K562 (cell line): ENCODE measurements at regions of chr12 and their contacts with region 1.

Region 1: GRCh38 chr12:118372541-118373495 is at the start of gene TAOK3:
- DNase-seq: peak; percentile 90 to 99 (median 93)
- ATAC-seq: peak; percentile 87
- H3K4me3 ChIP-seq: peak within 1 kb of the TSS; percentile 96
- H3K27ac ChIP-seq: peak within 1 kb of the TSS; percentile 82
- H3K4me1 ChIP-seq: peaks cover 14 to 31% of the 10 kb centered on the region in 2 experiments; a peak in 4 of 5 replicates
- H3K27me3 ChIP-seq: no peaks in the 10 kb centered on the region
- CTCF ChIP-seq: no peak
- EP300 ChIP-seq: peak; percentile 32
- POLR2A ChIP-seq: peak; percentile 88
- RAD21 ChIP-seq: 0 out of 4 replicates have a peak, but pooled peaks of 1 of the 2 experiments have one; percentile 2
- polyA plus RNA-seq, gene TAOK3: 24.3 to 28.0 TPM

Region 2: GRCh38 chr12:117874842-117875434 is 497.9 kb before region 1 on chr12:
- CTCF ChIA-PET with region 1: interaction called, 3 read pairs
- POLR2A ChIA-PET with region 1: no interaction called
- in situ Hi-C with region 1: no loop called
- intact Hi-C with region 1: loop called (anchors 5 kb)
- DNase-seq: peak; percentile 67 to 76 (median 74)
- ATAC-seq: peak; percentile 92
- H3K4me3 ChIP-seq: no peak overlapping the region
- H3K27ac ChIP-seq: no peak overlapping the region
- H3K4me1 ChIP-seq: peaks cover 0 to 4% of the 10 kb centered on the region in 2 experiments; a peak in 1 of 5 replicates
- H3K27me3 ChIP-seq: peaks cover 17 to 32% of the 10 kb centered on the region in 2 experiments; a peak in 4 of 5 replicates
- CTCF ChIP-seq: peak; percentile 79 to 87 (median 85)
- EP300 ChIP-seq: no peak
- POLR2A ChIP-seq: no peak
- RAD21 ChIP-seq: peak; percentile 60 to 87

Region 3: GRCh38 chr12:118120579-118121363 is 252.0 kb before region 1 on chr12:
- CTCF ChIA-PET with region 1: interaction called, 31 read pairs
- POLR2A ChIA-PET with region 1: interaction called, 14 read pairs
- in situ Hi-C with region 1: loop called (anchors 5 kb)
- intact Hi-C with region 1: loop called (anchors 1 kb)
- DNase-seq: peak; percentile 88 to 93 (median 90)
- ATAC-seq: peak; percentile 92
- H3K4me3 ChIP-seq: no peak overlapping the region
- H3K27ac ChIP-seq: peak overlapping the region; percentile 81
- H3K4me1 ChIP-seq: peaks cover 4 to 14% of the 10 kb centered on the region in 2 experiments; a peak in 4 of 5 replicates
- H3K27me3 ChIP-seq: no peaks in the 10 kb centered on the region
- CTCF ChIP-seq: peak in 2 of 3 experiments; percentile 55 to 64; a peak in 5 of 6 replicates
- EP300 ChIP-seq: no peak
- POLR2A ChIP-seq: no peak
- RAD21 ChIP-seq: peak in 1 of 2 experiments; percentile 55; a peak in 3 of 4 replicates

Region 4: GRCh38 chr12:118183705-118184104 is 189.1 kb before region 1 on chr12:
- CTCF ChIA-PET with region 1: interaction called, 62 read pairs
- POLR2A ChIA-PET with region 1: interaction called, 14 read pairs
- in situ Hi-C with region 1: loop called (anchors 25 kb)
- intact Hi-C with region 1: loop called (anchors 1 kb)
- DNase-seq: no peak
- ATAC-seq: no peak
- H3K4me3 ChIP-seq: no peak overlapping the region
- H3K27ac ChIP-seq: no peak overlapping the region
- H3K4me1 ChIP-seq: peaks cover 0 to 12% of the 10 kb centered on the region in 2 experiments; a peak in 3 of 5 replicates
- H3K27me3 ChIP-seq: no peaks in the 10 kb centered on the region
- CTCF ChIP-seq: no peak
- EP300 ChIP-seq: no peak
- POLR2A ChIP-seq: no peak
- RAD21 ChIP-seq: no peak

Region 5: DNA sequence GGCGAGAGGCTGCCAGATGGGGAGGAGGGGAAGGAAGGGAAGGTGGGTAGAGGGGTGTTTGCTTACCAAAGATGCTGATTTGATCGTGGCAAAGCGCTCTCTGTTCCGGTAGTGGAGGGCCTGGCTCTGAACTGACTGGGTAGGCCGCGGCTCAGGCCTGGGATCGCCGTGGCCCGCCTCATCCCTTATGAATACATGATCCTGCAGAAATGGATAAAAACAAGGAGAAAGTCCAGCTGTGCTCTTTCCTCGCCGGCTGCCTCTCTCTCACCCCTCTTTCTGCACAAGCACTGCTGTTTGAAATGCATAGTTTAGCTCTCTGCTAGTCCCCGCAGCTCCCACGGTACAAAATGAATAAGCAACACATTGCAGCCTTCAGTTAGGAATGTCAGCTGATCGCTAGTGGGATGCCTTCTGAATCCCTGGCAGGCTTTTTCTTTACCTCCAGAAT is 183.1 kb before region 1 on chr12:
- CTCF ChIA-PET with region 1: interaction called, 3 read pairs
- POLR2A ChIA-PET with region 1: interaction called, 14 read pairs
- in situ Hi-C with region 1: loop called (anchors 25 kb)
- intact Hi-C with region 1: no loop called
- DNase-seq: no peak
- ATAC-seq: no peak
- H3K4me3 ChIP-seq: no peak overlapping the region
- H3K27ac ChIP-seq: no peak overlapping the region
- H3K4me1 ChIP-seq: peaks cover 0 to 10% of the 10 kb centered on the region in 2 experiments; a peak in 3 of 5 replicates
- H3K27me3 ChIP-seq: no peaks in the 10 kb centered on the region
- CTCF ChIP-seq: no peak
- EP300 ChIP-seq: no peak
- POLR2A ChIP-seq: no peak
- RAD21 ChIP-seq: no peak

Region 6: DNA sequence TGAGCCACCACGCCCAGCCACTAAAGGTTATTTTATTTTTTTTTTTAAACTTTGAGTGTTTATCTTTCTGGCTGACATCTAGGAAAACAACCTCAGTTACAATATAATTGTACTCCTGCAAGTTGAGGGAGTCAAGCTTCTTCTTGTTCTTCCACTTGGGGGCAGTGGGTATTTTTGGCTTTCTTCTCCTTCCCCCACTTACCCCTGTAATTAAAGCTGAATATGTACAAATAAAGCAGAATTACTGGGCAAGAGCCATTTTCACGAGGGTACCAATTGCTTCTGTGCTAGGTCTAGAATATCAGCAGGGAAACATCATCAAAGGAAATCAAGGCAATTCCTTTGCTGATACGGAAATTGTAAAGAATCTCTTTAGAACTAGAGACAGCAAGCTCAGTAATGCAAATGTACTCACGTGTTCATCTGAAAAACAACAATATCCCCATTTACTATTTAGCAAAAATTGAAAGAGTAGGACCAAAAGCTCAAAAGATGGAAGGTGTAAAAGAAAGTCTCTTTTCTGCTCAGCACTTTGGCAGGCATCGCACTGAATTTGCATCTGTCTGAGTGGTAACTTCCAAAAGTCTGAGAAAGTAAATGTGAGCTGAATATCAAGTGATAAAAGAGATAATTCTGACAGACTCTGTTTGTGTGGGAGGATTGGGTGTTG is 72.9 kb before region 1 on chr12:
- CTCF ChIA-PET with region 1: interaction called, 7 read pairs
- POLR2A ChIA-PET with region 1: no interaction called
- in situ Hi-C with region 1: no loop called
- intact Hi-C with region 1: loop called (anchors 1 kb)
- DNase-seq: peak in 2 of 4 experiments; percentile 9 to 18
- ATAC-seq: peak; percentile 52; the same call in 1 of the 3 replicates
- H3K4me3 ChIP-seq: no peak overlapping the region
- H3K27ac ChIP-seq: no peak overlapping the region
- H3K4me1 ChIP-seq: peaks cover 0 to 5% of the 10 kb centered on the region in 2 experiments; a peak in 2 of 5 replicates
- H3K27me3 ChIP-seq: no peaks in the 10 kb centered on the region
- CTCF ChIP-seq: peak in 2 of 3 experiments; percentile 10 to 42; a peak in 3 of 6 replicates
- EP300 ChIP-seq: no peak
- POLR2A ChIP-seq: no peak
- RAD21 ChIP-seq: peak; percentile 30 to 45

Region 7: DNA sequence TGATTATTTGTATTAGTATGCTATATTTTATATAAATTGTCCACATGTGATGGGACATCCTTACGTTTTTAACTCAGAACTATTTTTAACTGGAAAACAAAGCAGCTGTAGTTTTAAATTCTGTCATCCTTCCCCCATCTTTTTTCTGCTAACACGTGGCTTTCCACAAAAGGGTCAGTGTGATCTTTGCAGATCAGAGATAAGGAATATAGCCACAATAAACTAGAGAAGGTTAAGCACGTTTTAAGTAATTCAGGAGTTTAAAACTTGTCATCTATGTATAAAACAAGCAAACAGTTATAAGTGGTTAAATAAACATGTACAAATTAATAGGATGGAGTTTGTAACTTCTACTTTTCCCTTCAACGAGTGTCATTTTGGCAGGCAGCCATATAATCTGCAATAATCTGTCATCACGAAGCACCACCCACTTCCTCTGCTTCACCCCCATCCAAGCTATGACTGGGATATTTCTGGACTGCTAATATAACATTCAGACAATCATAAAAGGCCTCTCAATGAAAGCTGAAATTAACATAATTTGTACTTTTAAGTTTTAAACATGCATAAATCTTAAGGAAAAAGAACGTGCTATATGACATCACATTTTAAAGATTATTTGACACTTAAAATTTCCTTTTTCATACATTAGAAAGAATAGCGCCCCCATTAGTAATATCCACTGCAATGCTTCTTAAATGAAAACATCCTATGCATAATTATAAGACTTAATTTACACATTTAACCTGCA is 15.4 kb before region 1 on chr12:
- CTCF ChIA-PET with region 1: interaction called, 4 read pairs
- POLR2A ChIA-PET with region 1: interaction called, 15 read pairs
- in situ Hi-C with region 1: no loop called
- intact Hi-C with region 1: no loop called
- DNase-seq: peak; percentile 63 to 90 (median 80)
- ATAC-seq: peak; percentile 87
- H3K4me3 ChIP-seq: peak overlapping the region; percentile 41
- H3K27ac ChIP-seq: peak overlapping the region; percentile 88
- H3K4me1 ChIP-seq: peaks cover 8 to 20% of the 10 kb centered on the region in 2 experiments; a peak in 3 of 5 replicates
- H3K27me3 ChIP-seq: no peaks in the 10 kb centered on the region
- CTCF ChIP-seq: peak in 2 of 3 experiments; percentile 7 to 55; a peak in 4 of 6 replicates
- EP300 ChIP-seq: peak; percentile 71
- POLR2A ChIP-seq: 0 out of 2 replicates have a peak, but pooled peaks have one; percentile 49
- RAD21 ChIP-seq: peak; percentile 7 to 21; a peak in 2 of 4 replicates